ENCODE measurements at regions of chr4 and their contacts with region 1.

Region 1: DNA sequence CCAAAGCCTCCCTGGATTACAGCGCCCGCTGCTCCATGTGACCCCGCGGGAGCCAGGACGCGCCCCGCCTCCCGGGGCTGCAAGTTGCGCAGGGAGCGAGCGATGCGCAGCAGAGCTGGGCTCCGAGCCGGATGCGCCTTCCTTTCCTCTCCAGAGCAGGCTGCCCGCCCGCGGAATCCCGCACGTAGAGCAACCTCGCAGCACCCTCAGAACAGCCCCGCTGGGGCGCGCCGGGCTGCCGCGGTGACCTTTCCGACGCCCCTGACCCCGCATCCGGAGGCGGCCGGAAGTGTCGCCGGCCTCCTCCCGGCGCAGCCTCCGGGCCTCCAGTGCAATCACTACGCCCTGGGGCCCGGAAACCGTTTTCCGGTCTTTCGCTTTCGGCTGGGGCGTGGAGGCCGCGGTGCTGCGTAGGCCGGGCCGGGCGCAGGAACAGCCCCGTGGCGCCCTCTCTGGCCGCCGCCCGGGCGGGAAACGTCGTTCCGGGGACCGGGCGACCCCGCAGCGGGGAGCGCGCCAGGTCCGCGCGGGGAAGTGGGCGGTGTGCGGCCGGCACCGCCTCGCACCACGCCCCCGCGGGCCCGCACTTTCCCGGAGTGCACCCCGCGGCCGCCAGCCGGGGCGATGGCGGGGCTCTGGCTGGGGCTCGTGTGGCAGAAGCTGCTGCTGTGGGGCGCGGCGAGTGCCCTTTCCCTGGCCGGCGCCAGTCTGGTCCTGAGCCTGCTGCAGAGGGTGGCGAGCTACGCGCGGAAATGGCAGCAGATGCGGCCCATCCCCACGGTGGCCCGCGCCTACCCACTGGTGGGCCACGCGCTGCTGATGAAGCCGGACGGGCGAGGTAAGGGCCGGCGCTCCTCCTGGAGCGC is at the start of gene CYP4V2:
- DNase-seq: peak; percentile 93
- total RNA-seq, gene CYP4V2: 20.4 TPM

Region 2: DNA sequence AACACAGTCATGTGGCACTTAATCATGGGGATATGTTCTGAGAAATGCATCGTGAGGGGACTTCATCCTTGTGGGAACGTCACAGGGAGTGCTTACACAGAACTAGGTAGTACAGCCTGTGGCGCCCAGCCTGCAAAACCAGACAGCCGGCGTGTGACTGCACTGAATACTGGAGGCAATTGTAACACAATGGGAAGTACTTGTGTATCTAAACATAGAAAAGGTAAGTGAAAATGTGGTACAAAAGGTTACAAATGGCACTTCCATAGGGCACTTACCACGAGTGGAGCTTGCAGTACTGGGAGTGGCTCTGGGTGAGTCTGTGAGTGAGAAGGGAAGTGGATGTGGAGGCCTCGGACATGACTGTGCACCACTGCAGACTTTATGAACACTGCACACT is 117.2 kb before region 1 on chr4:
- intact Hi-C with region 1: loop called (anchors 5 kb)
- DNase-seq: no peak

Region 3: DNA sequence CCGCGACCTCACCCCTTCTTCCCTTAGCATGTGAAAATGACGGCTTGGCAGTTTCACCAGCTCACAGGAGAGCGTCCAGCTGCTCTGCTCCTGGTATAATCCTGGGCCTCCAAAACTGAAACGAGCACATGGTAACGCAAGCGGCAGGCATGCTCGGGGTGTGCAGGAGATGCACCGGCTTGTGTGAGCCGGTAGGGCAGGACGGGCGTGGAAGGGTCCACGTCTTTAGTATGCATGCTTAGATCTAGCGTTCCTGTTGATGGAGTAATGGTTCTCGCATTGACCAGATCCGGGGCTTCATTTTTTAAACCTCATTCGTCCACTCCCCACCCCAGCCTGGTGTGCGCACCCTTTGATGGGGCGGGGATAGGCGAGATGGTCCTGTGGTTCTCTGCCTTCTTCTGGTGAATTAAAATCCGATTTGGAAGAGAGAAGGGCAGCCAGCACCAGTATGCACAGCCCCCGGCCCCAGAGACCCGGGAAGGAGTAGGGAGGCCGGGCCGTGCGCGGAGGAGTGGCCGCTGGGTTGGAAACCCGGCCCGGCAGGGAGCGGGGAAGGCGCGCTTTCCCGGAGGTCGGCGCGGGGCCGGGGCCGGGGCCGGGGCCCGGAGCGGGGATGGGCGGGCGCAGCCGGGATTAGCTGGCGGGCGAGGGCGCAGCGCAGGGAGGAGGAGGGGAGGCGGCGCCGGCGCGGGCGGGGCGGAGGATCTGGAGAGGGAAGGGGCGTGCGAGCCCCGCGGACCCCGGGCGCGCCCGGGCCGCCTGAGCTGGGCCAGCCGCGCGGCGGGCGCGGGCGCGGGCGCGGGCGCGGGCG is 47.1 kb before region 1 on chr4:
- intact Hi-C with region 1: loop called (anchors 2 kb)
- DNase-seq: no peak